ENCODE measurements at regions of chr3 and their contacts with region 1.

Region 1: GRCh38 chr3:44913868-44914468 is 39.6 kb downstream of the TGM4 start:
- DNase-seq: peak; percentile 88
- H3K4me3 Mint-ChIP-seq: no peak overlapping the region
- H3K27ac Mint-ChIP-seq: no peak overlapping the region
- H3K4me1 Mint-ChIP-seq: no peaks in the 10 kb centered on the region
- H3K27me3 Mint-ChIP-seq: peaks cover 2% of the 10 kb centered on the region

Region 2: GRCh38 chr3:44323341-44323955 is 590.5 kb before region 1 on chr3:
- intact Hi-C with region 1: loop called (anchors 5 kb)
- DNase-seq: peak; percentile 85
- H3K4me3 Mint-ChIP-seq: no peak overlapping the region
- H3K27ac Mint-ChIP-seq: no peak overlapping the region
- H3K4me1 Mint-ChIP-seq: no peaks in the 10 kb centered on the region
- H3K27me3 Mint-ChIP-seq: peaks cover 31% of the 10 kb centered on the region

Measured in activated CD4-positive, alpha-beta T cell treated with anti-CD3 and anti-CD28 coated beads, Interleukin-2, amount 10 ng/mL, durations not matched to agents 24 days and 14 days (primary cell).